Heart right ventricle (tissue), 16 donors: ENCODE measurements at regions of chr2 and their contacts with region 1.

Region 1: DNA sequence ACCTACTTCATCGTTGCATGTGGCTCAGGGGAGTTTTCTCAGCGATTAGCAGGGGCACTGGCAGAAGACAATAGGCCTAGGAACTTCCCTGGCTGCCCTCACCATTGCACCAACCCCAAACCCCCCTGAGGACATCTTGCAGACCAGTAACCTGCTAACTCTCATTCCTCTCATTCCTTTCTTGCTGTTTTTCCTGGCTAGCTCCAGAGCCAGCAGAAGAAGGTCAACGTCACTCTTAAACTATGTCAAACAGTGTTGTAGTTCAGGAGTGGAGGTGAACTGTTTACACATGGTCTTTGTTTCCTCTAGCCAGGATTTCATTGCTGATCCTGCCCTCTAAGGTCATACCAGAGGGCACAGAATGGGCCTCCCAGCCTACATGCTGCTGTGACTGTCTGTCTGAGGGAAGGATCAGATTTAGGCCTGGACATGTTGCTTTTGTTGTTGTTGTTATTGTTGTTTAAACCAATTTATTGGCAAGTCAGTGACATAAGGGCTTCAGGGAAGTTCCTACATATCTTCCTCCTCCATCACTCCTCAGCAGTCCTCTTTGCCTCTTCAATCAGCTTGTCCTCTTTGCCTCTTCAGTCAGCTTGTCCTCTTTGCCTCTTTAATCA is 471.8 kb upstream of the TNP1 start:
- DNase-seq: peak in 1 of 2 donors; percentile 21
- ATAC-seq: peak; percentile 70 to 93 (median 84)
- H3K4me3 ChIP-seq: no peak overlapping the region
- H3K27ac ChIP-seq: peak overlapping the region; percentile 16 to 83 (median 66)
- H3K4me1 ChIP-seq: peaks cover 4 to 34% (median 6%) of the 10 kb centered on the region in 9 donors
- H3K27me3 ChIP-seq: peaks cover 0 to 9% (median 0%) of the 10 kb centered on the region in 7 donors
- CTCF ChIP-seq: no peak

Region 2: GRCh38 chr2:217218269-217219163 is 113.1 kb before region 1 on chr2:
- intact Hi-C with region 1: loop called in 1 of 10 experiments (anchors 10 kb)
- DNase-seq: peak in 1 of 2 donors; percentile 17
- ATAC-seq: peak in 6 of 8 donors; percentile 66 to 82 (median 76)
- H3K4me3 ChIP-seq: no peak overlapping the region
- H3K27ac ChIP-seq: peak overlapping the region in 1 of 10 donors; percentile 40
- H3K4me1 ChIP-seq: peaks cover 0 to 62% (median 15%) of the 10 kb centered on the region in 9 donors
- H3K27me3 ChIP-seq: peaks cover 0 to 83% (median 0%) of the 10 kb centered on the region in 7 donors
- CTCF ChIP-seq: no peak

Region 3: GRCh38 chr2:217370391-217370790 is 38.8 kb after region 1 on chr2:
- intact Hi-C with region 1: no loop called
- DNase-seq: no peak
- ATAC-seq: no peak
- H3K4me3 ChIP-seq: no peak overlapping the region
- H3K27ac ChIP-seq: no peak overlapping the region
- H3K4me1 ChIP-seq: peaks cover 0 to 26% (median 3%) of the 10 kb centered on the region in 9 donors
- H3K27me3 ChIP-seq: no peaks in the 10 kb centered on the region
- CTCF ChIP-seq: no peak